ENCODE measurements at regions of chr17 and their contacts with region 1.

Region 1: DNA sequence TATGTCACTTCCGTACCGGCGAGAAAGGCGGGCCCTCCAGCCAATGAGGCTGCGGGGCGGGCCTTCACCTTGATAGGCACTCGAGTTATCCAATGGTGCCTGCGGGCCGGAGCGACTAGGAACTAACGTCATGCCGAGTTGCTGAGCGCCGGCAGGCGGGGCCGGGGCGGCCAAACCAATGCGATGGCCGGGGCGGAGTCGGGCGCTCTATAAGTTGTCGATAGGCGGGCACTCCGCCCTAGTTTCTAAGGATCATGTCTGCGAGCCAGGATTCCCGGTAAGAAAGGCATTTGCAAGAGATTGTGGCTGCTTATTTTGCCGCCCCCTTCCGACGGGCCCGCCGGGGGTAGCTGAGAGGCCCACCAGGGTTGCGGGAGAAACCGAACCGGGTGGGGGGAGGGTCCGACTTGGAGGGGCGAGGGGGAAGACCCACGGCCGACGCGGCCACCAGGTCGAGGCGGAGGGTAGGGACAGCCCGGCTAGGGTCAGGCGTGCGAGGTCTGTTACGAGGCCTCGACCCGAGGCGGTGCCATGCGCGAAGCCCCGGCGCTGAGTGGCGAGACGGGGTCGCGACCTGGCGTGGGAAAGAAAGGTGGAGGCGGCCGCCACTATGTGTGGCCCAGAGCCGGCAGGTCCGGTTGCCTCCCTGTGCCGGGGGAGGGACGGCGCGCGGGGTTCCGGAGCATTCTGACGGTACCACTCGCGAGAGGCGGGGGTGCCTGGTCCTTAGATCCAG is 6.7 kb upstream of the CD68 start:
- DNase-seq: peak; percentile 99 to 100 (median 100)
- H3K4me3 ChIP-seq: peak overlapping the region; percentile 100
- H3K27ac ChIP-seq: peak overlapping the region; percentile 94 to 97
- H3K4me1 ChIP-seq: peaks cover 3% of the 10 kb centered on the region
- H3K27me3 ChIP-seq: no peaks in the 10 kb centered on the region
- CTCF ChIP-seq: peak in 1 of 3 donors; percentile 37
- EP300 ChIP-seq: peak; percentile 74
- POLR2A ChIP-seq: peak; percentile 96

Region 2: GRCh38 chr17:7306911-7307686 is 265.7 kb before region 1 on chr17 and contains the start of gene EIF5A:
- intact Hi-C with region 1: loop called in 1 of 4 experiments (anchors 5 kb)
- DNase-seq: peak; percentile 100
- H3K4me3 ChIP-seq: peak within 1 kb of the TSS; percentile 91
- H3K27ac ChIP-seq: peak within 1 kb of the TSS; percentile 94
- H3K4me1 ChIP-seq: peaks cover 9% of the 10 kb centered on the region
- H3K27me3 ChIP-seq: no peaks in the 10 kb centered on the region
- CTCF ChIP-seq: peak in 1 of 3 donors; percentile 11
- EP300 ChIP-seq: peak; percentile 20
- POLR2A ChIP-seq: peak; percentile 90
- total RNA-seq, gene EIF5A: 55.9 to 302 (median 229) TPM

Region 3: DNA sequence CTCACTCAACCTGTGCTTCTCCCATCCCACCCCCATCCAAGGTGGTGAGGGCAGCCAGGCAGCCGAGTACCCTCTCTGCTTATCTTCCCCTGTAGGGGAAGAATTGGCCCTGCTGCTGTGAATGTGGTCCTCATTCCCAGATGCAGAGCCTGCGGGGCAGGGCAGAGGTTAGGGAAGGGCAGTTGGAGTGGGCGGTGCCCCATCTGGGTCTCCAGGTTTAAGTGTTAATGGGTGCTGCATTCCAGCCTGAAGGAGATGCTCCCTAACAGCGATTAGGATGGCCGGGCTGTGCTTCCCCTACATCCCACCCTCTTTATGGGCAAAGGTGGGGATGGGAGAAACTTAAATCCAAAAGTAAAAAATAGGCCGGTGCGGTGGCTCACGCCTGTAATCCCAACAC is 205.7 kb before region 1 on chr17:
- intact Hi-C with region 1: no loop called
- DNase-seq: no peak
- H3K4me3 ChIP-seq: no peak overlapping the region
- H3K27ac ChIP-seq: no peak overlapping the region
- H3K4me1 ChIP-seq: no peaks in the 10 kb centered on the region
- H3K27me3 ChIP-seq: no peaks in the 10 kb centered on the region
- CTCF ChIP-seq: no peak
- EP300 ChIP-seq: no peak
- POLR2A ChIP-seq: no peak

Measured in ovary (tissue), 10 donors.